Heart left ventricle (tissue), 16 donors: ENCODE measurements at regions of chr10 and their contacts with region 1.

Region 1: DNA sequence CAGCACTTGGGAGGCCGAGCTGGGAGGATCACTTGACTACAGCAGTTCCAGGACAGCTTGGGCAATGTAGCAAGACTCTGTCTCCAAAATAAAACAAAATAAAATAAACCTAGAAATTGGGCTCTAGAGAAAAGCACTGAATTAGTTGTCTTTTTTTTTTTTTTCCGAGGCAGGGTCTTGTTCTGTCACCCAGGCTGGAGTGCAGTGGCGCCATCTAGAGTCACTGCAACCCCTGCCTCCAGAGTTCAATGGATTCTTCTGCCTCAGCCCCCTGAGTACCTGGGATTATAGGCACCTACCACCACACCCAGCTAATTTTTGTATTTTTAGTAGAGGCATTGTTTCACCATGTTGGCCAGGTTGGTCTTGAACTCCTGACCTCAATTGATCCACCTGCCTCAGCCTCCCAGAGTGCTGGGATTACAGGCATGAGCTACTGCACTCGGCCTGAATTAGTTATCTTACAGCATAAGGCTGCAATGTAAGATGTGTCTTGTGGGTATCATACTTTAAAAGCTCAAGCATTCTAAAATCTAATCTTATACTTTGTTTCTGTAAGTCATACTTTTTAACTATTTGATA is 12.8 kb downstream of the MEIG1 start:
- DNase-seq: peak in 1 of 5 donors; percentile 36
- ATAC-seq: no peak
- H3K4me3 ChIP-seq: no peak overlapping the region
- H3K27ac ChIP-seq: no peak overlapping the region
- H3K4me1 ChIP-seq: no peaks in the 10 kb centered on the region
- H3K27me3 ChIP-seq: peaks cover 0 to 16% (median 0%) of the 10 kb centered on the region in 9 donors
- CTCF ChIP-seq: peak; percentile 27 to 66 (median 53)
- POLR2A ChIP-seq: no peak

Region 2: DNA sequence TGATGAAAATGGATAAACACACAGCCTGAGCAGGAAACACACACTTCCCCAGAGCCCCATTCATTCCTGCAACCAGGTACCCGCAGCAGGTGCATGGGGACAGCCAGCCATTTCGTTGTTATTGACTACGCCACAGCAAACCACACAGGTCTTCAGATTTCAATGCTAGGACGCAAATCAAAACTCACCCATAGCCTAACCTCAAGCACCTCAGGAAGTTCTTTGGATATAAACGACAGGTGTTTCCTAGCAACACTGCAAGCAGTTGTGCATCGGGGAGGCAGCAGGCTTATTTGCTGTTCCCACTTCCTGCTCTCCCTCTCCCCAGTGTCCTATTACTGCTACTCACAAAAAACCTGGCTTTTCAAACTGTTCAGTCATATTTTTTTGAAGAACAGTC is 464.8 kb before region 1 on chr10:
- intact Hi-C with region 1: loop called in 2 of 10 experiments (anchors 10 kb)
- DNase-seq: no peak
- ATAC-seq: no peak
- H3K4me3 ChIP-seq: no peak overlapping the region
- H3K27ac ChIP-seq: no peak overlapping the region
- H3K4me1 ChIP-seq: no peaks in the 10 kb centered on the region
- H3K27me3 ChIP-seq: no peaks in the 10 kb centered on the region
- CTCF ChIP-seq: no peak
- POLR2A ChIP-seq: no peak

Region 3: GRCh38 chr10:14536241-14537213 is 435.4 kb before region 1 on chr10:
- intact Hi-C with region 1: loop called in 1 of 10 experiments (anchors 5 kb)
- DNase-seq: peak; percentile 72 to 86 (median 75)
- ATAC-seq: peak; percentile 81 to 96 (median 90)
- H3K4me3 ChIP-seq: no peak overlapping the region
- H3K27ac ChIP-seq: peak overlapping the region in 2 of 12 donors; percentile 45 to 56
- H3K4me1 ChIP-seq: peaks cover 0 to 24% (median 4%) of the 10 kb centered on the region in 12 donors
- H3K27me3 ChIP-seq: no peaks in the 10 kb centered on the region
- CTCF ChIP-seq: peak; percentile 43 to 80 (median 63)
- POLR2A ChIP-seq: no peak

Region 4: DNA sequence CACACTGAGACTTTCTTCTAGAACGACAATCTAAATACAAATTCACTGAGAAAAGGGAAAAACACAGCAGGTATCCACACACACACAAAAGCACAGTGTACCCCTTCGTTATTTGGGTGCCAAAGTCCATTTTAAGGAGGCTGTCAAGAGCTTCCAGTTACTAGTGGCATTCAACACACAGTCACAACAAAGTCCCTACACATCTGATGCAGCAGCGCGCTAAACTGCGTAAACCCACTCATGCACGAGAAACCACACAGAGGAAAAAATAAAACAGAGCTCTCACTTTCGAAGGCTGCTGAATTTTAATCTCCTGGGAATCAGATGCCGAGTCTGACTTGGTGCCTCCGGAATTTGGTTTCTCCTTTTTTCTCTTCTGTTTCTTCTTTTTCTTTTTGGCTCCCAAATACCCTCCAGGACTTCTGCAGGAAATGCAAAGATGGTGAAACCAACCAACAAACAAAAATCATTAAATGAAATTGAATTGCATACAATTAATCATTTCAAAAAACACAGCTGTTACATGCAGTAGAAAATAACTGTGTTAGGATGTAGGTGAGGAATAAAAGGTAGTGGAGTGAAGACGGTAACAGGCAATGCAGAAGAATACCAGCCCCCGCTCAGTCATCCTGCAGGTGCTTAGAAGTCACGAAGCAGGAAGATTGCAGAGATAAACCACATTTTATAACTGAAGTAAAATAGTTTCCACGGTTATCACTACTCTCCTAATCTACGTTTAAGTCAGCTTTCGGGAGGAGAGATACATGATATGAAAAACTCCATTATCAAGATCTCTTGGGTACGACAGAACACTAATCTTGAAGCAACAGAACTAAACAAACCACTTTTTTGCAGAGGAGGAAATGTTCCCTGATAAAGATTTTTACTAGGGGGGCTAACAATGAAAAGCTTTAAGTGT is 169.4 kb after region 1 on chr10:
- intact Hi-C with region 1: no loop called
- DNase-seq: no peak
- ATAC-seq: no peak
- H3K4me3 ChIP-seq: no peak overlapping the region
- H3K27ac ChIP-seq: no peak overlapping the region
- H3K4me1 ChIP-seq: peaks cover 0 to 15% (median 0%) of the 10 kb centered on the region in 12 donors
- H3K27me3 ChIP-seq: no peaks in the 10 kb centered on the region
- CTCF ChIP-seq: no peak
- POLR2A ChIP-seq: no peak